CD4-positive, alpha-beta T cell (primary cell): ENCODE measurements at regions of chr12 and their contacts with region 1.

Region 1: GRCh38 chr12:50283229-50283923 is at the start of gene LIMA1:
- DNase-seq: peak; percentile 86 to 97 (median 92)
- ATAC-seq: peak; percentile 95
- H3K4me3 ChIP-seq: peak within 1 kb of the TSS; percentile 78
- H3K4me3 Mint-ChIP-seq: peak within 1 kb of the TSS; percentile 94
- H3K27ac ChIP-seq: peak within 1 kb of the TSS; percentile 19 to 53
- H3K27ac Mint-ChIP-seq: peak within 1 kb of the TSS; percentile 86
- H3K4me1 ChIP-seq: peaks cover 22% of the 10 kb centered on the region
- H3K4me1 Mint-ChIP-seq: peaks cover 26% of the 10 kb centered on the region
- H3K27me3 ChIP-seq: no peaks in the 10 kb centered on the region
- H3K27me3 Mint-ChIP-seq: no peaks in the 10 kb centered on the region
- CTCF ChIP-seq: no peak
- total RNA-seq, gene LIMA1: 4.6 to 5.1 TPM

Region 2: DNA sequence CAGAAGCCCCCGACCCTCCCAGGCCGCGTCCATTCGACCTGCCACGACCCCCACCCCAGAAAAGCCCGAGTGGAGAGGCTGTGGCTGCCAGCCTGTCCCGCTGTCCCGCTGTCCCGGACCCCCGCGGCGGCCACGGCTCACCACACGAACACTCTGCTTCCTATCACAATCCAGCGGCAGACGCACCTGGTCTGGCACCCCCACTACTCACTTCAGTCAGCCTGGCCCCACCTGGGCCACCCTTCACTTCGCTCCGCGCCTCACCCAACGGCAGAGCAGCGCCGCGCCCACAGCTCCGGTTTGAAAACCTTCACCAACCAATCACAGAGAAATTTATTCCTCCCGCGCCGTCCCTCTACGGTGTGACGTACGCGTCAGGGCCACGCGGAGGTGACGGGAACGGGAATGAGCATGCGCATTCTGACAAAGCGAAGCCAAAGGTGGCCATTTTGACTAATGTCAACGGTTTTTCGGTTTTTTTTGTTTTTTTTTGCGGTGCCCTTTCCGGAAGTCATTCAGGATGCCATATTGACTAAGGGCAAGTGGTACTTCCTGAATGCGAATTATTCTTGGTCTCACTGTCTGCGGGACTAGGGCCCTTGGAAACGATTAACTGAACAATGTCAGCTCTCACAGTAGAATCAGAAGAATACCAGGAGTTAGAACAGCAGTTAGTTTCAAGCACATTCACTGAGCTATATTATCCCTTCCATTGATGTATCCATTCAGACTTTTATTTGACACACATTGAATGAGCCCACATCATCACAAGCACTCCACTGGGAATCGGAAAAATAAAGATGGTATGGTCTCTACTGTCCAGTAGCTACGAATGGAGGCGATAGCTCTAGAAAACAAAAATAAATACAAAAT is 258.0 kb before region 1 on chr12 and contains the start of gene RACGAP1:
- CTCF ChIA-PET with region 1: no interaction called
- POLR2A ChIA-PET with region 1: no interaction called
- intact Hi-C with region 1: loop called in 1 of 2 experiments (anchors 10 kb)
- DNase-seq: peak; percentile 88 to 99 (median 94)
- ATAC-seq: peak; percentile 97
- H3K4me3 ChIP-seq: peak within 1 kb of the TSS; percentile 75
- H3K4me3 Mint-ChIP-seq: peak within 1 kb of the TSS; percentile 94
- H3K27ac ChIP-seq: peak within 1 kb of the TSS; percentile 16 to 28
- H3K27ac Mint-ChIP-seq: peak within 1 kb of the TSS; percentile 66
- H3K4me1 ChIP-seq: peaks cover 18% of the 10 kb centered on the region
- H3K4me1 Mint-ChIP-seq: peaks cover 15% of the 10 kb centered on the region
- H3K27me3 ChIP-seq: no peaks in the 10 kb centered on the region
- H3K27me3 Mint-ChIP-seq: peaks cover 13% of the 10 kb centered on the region
- CTCF ChIP-seq: no peak
- total RNA-seq, gene RACGAP1: 3.0 to 3.3 TPM

Region 3: DNA sequence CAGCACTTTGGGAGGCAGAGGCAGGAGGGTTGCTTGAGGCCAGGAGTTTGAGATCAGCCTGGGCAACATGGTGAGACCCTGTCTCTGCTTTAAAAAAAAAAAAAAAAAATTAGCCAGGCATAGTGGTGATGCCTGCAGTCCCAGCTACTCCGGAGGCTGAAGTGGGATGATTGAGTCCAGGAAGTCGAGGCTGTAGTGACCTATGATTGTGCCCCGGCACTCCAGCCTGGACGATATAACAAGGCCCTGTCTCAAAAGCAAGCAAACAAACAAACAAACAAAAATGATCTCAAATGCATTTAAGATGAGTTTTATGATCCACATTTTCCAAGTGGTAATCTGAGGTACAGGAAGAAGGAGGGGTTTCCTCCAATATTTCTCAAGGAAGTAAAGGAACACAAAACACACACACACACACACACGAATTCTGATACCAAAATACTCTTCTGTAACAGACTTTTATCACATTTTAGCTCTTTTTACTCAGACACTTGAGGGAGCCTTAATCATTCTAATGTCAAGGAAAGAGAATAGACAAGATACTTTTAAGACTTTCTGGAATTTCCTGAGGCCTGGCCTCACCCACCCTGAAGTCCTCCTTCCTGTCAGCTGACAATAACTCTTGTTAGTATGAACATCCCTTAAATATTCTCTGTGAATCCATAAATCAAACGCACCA is 71.8 kb before region 1 on chr12:
- CTCF ChIA-PET with region 1: no interaction called
- POLR2A ChIA-PET with region 1: interaction called, 15 read pairs
- intact Hi-C with region 1: no loop called
- DNase-seq: peak in 3 of 14 experiments; percentile 14 to 49 (median 38)
- ATAC-seq: peak; percentile 34
- H3K4me3 ChIP-seq: no peak overlapping the region
- H3K4me3 Mint-ChIP-seq: peak overlapping the region; percentile 47
- H3K27ac ChIP-seq: peak overlapping the region; percentile 51 to 80
- H3K27ac Mint-ChIP-seq: peak overlapping the region; percentile 90
- H3K4me1 ChIP-seq: peaks cover 34% of the 10 kb centered on the region
- H3K4me1 Mint-ChIP-seq: peaks cover 42% of the 10 kb centered on the region
- H3K27me3 ChIP-seq: no peaks in the 10 kb centered on the region
- H3K27me3 Mint-ChIP-seq: no peaks in the 10 kb centered on the region
- CTCF ChIP-seq: no peak

Region 4: DNA sequence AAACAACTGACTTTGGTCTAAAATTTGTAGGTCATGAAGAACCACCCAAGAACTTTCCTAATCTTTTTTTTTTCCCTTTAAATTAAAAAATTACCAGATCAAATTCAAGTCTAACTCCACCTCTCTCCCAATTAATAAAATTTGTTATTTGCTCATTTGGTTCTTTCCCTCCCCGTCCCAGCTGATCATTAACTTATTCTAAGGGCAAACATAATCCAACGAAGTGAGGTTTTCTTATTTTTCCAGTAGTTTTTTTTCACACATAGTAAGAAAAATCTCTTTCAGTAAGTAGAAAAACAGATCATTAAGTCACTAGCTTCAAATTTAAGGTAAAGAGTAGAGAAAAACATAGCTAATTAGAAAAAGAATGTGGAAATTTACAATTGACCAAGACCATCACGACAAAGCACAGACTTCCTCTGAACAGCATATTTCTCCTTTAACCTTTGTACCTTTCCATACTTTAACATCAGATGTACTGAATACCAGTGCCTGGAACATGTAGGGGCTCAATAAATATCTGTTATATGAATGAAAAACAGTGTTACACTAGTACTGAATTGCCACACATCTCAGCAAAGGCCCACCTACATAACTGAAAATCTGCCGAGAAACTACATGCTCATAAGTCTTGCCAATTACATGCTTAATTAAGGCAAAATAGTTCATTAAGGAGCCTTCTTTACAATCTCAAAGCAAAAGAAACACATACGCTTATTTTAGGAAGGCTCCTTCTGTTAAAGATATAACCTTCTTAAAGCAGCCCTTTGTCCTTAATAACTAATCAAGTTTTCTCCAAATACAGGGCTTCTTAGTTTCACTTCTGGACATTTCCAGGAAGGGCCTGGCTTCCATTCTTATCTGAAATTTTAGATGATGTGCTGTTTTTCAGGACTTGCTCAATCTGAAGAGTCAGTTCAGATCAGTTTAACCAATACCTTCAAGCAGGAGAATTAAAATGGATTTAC is 11.8 kb before region 1 on chr12:
- CTCF ChIA-PET with region 1: no interaction called
- POLR2A ChIA-PET with region 1: interaction called, 10 read pairs
- intact Hi-C with region 1: no loop called
- DNase-seq: no peak
- ATAC-seq: no peak
- H3K4me3 ChIP-seq: no peak overlapping the region
- H3K4me3 Mint-ChIP-seq: no peak overlapping the region
- H3K27ac ChIP-seq: no peak overlapping the region
- H3K27ac Mint-ChIP-seq: no peak overlapping the region
- H3K4me1 ChIP-seq: no peaks in the 10 kb centered on the region
- H3K4me1 Mint-ChIP-seq: peaks cover 8% of the 10 kb centered on the region
- H3K27me3 ChIP-seq: no peaks in the 10 kb centered on the region
- H3K27me3 Mint-ChIP-seq: no peaks in the 10 kb centered on the region
- CTCF ChIP-seq: no peak

Region 5: GRCh38 chr12:51951199-51951842 is 1667.9 kb after region 1 on chr12 and contains the start of gene ACVR1B:
- CTCF ChIA-PET with region 1: no interaction called
- POLR2A ChIA-PET with region 1: no interaction called
- intact Hi-C with region 1: loop called in 1 of 2 experiments (anchors 5 kb)
- DNase-seq: peak; percentile 84 to 96 (median 90)
- ATAC-seq: peak; percentile 96
- H3K4me3 ChIP-seq: peak within 1 kb of the TSS; percentile 75
- H3K4me3 Mint-ChIP-seq: peak within 1 kb of the TSS; percentile 97
- H3K27ac ChIP-seq: peak within 1 kb of the TSS in 1 of 2 donors; percentile 54
- H3K27ac Mint-ChIP-seq: peak within 1 kb of the TSS; percentile 91
- H3K4me1 ChIP-seq: peaks cover 24% of the 10 kb centered on the region
- H3K4me1 Mint-ChIP-seq: peaks cover 51% of the 10 kb centered on the region
- H3K27me3 ChIP-seq: peaks cover 0 to 2% of the 10 kb centered on the region in 2 experiments
- H3K27me3 Mint-ChIP-seq: no peaks in the 10 kb centered on the region
- CTCF ChIP-seq: no peak
- total RNA-seq, gene ACVR1B: 14.2 to 14.5 TPM